Activated T-helper 2 cell treated with anti-CD3 and anti-CD28 coated beads, Interferon-gamma antibody, Interleukin-2, Interleukin-4, amounts not matched to agents 10 μg/mL and 5 μg/mL and 100 μg/mL, durations not matched to agents 14 hours and 24 hours and 36 hours (primary cell): ENCODE measurements at regions of chr10 and their contacts with region 1.

Region 1: GRCh38 chr10:24901686-24902399 is 50.6 kb downstream of the PRTFDC1 start:
- DNase-seq: no peak
- H3K4me3 Mint-ChIP-seq: no peak overlapping the region
- H3K27ac Mint-ChIP-seq: peak overlapping the region; percentile 57
- H3K4me1 Mint-ChIP-seq: peaks cover 36% of the 10 kb centered on the region
- H3K27me3 Mint-ChIP-seq: no peaks in the 10 kb centered on the region

Region 2: DNA sequence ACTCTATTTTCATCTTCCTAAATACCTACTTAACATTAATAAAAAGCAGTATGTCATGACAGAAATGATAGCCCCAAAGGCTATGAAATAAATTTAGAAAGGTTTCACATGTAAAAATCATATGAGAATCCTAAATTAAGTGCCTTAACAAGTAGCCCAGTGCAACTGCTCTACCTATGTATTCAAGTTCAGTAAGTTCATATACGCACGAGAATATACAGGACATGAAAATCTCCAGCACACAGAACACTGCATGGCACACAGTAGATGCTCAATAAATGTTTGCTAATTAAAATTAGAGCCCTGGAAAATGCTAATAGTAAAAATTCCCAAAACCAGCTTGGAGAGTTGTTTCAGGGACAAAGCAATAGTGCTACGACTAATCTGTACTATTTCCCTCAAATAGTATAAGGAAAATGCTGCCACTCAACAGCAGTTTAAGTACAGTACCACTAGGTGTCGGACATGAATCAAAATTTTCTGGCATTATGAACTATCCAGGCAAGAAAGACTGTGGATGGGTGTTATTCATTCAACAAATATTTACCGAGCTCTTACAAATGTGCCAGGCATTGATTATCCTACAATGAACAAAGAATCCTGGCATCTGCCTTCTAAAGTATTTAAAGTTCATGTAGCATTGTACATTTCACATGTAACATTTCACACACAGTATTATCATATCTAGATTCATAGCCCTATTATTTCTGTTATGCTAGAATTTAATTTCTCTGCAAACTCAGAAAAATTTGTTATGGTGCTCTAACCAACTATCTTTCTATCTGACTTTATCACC is 259.0 kb before region 1 on chr10:
- intact Hi-C with region 1: no loop called
- DNase-seq: no peak
- H3K4me3 Mint-ChIP-seq: no peak overlapping the region
- H3K27ac Mint-ChIP-seq: no peak overlapping the region
- H3K4me1 Mint-ChIP-seq: peaks cover 6% of the 10 kb centered on the region
- H3K27me3 Mint-ChIP-seq: no peaks in the 10 kb centered on the region

Region 3: DNA sequence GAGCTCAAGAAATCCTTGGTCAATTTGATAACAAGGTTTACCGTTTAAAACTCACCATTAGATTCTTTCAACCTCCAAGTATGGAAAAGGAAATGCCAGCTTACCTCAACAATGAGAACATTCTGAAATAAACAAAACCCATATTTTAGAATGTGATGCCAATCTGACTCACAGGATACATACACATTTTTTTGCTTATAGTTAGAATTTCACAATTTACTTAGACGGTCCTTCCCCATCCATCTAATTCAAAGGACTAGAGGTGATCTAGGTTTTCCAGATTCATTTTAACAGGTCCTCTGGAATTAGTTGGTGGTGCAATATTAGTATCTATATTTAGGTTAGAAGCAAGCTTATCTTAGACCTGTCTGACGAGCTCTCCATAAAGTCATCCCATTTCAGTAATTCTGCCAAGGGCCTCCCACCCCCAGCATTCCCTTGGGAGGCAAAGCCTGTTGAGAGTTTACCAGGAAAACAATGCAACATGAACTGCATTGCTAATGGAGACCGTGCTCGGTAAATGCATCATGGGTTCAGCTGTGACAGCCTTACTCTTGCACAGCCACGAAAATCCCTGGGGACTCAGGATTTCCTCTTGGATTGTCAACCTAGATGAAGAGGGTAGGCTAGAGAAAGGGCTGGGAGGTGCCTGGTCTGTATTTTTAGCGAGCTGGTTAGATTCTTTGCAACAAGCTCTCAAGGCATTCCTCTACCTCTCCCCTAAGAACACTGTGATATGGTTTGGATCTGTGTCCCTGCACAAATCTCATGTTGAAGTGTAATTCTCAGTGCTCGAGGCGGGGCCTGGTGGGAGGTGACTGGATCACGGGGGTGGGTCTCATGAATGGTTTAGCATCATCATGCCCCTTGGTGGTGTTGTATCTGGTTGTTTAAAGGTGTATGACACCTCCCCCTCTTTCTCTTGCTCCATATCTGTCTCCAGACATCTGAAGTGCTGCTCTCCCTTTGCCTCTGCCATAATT is 43.3 kb before region 1 on chr10:
- intact Hi-C with region 1: no loop called
- DNase-seq: no peak
- H3K4me3 Mint-ChIP-seq: no peak overlapping the region
- H3K27ac Mint-ChIP-seq: no peak overlapping the region
- H3K4me1 Mint-ChIP-seq: peaks cover 2% of the 10 kb centered on the region
- H3K27me3 Mint-ChIP-seq: peaks cover 15% of the 10 kb centered on the region

Region 4: DNA sequence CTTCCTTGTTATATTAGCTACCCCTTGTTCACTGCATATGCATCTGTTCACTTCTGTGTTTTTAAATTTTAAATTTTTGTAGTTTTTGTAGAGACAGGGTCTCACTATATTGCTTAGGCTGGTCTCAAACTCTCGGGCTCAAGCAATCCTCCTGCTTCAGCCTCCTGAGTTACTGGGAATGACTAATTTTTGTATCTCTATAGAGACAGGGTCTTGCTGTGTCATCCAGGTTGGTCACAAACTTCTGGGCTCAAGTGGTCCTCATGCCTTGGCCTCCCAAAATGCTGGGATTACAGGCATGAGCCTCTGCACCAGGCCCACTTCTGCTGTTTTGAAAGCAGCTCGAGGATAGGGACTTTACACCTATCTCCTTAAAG is 14.0 kb before region 1 on chr10:
- intact Hi-C with region 1: loop called (anchors 2 kb)
- DNase-seq: no peak
- H3K4me3 Mint-ChIP-seq: no peak overlapping the region
- H3K27ac Mint-ChIP-seq: peak overlapping the region; percentile 64
- H3K4me1 Mint-ChIP-seq: peaks cover 27% of the 10 kb centered on the region
- H3K27me3 Mint-ChIP-seq: no peaks in the 10 kb centered on the region

Region 5: GRCh38 chr10:24920907-24921881 is 19.4 kb after region 1 on chr10:
- intact Hi-C with region 1: loop called (anchors 1 kb)
- DNase-seq: peak; percentile 25
- H3K4me3 Mint-ChIP-seq: no peak overlapping the region
- H3K27ac Mint-ChIP-seq: peak overlapping the region; percentile 85
- H3K4me1 Mint-ChIP-seq: peaks cover 25% of the 10 kb centered on the region
- H3K27me3 Mint-ChIP-seq: no peaks in the 10 kb centered on the region

Region 6: DNA sequence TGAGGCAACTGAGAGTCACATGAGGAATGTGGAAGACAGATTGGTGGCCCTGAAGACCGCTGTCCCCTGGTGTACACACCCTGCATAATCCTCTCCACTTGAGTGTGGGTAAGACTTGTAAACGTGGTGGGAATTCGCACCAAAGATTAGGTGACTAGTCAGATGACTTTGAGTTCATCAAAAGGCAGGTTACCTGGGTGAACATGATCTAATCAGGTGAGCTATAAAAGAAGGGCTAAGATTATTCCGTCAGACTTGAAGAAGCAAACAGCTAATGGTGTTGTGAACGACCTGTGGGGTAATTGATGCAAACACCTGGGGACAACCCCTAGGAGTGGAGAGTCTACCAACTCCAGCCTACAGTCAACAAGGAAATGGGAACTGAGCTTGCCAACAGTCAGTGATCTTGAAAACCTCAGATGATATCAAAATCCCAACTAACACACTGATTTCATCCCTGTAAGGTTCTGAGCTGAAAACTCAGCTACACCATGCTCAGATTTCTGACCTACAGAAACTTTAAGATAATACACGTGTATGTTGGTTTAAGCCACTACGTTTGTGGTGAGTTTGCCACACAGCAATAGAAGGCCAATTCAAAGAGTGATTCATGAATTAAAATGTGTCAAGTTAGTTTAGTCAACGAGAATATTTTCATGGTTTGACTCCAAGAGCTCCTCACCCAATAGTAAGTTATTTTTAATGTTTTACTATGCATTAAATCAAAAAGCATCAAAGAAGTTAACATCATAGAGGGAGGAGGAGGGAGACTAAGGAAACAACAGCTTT is 33.9 kb after region 1 on chr10:
- intact Hi-C with region 1: no loop called
- DNase-seq: no peak
- H3K4me3 Mint-ChIP-seq: no peak overlapping the region
- H3K27ac Mint-ChIP-seq: no peak overlapping the region
- H3K4me1 Mint-ChIP-seq: peaks cover 6% of the 10 kb centered on the region
- H3K27me3 Mint-ChIP-seq: peaks cover 13% of the 10 kb centered on the region

Region 7: DNA sequence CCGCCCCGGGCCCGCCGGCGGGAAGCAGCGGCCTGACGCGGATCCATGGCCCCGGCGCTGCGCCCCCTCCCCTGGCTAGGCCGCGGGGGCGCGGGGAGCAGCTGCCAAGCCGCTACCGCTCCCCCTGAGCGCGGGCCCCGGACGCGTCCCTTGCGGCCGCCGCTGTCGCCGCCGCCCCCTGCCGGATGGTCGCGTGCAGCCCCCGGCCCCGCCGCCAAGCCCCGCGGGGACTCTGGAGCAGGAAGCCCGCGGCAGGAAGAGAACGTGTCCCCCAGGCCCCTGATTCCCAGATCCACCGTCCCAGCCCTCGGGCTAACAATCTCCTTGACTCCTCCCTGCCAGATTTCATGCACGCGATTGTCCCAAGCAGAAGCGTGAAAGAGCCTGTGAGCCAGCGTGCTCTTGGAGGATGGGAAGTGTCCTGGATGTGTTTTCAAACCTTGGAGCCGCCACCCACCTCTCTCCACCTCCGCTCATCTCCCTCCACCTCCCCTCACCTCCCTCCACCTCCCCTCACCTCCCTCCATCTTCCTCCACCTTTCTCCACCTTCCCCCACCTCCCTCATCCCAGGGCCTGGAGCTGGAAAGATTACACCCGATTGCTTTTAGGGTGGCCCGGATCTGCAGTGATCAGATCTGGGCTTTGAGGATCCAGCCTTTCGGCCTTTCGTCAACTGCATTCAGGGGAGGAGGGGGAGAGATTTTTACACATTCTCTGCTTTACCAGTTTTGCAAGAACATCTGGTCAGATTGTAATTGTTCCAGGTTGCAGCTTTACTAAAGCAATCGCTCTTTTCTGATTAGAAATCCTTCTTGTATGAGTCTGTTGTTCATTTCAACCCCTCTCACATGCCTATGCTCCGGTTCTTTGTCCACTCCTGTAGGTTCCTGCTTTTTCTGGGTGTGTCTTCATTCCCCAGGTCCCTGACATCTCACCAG is 51.1 kb after region 1 on chr10:
- intact Hi-C with region 1: loop called (anchors 5 kb)
- DNase-seq: peak; percentile 15
- H3K4me3 Mint-ChIP-seq: peak overlapping the region; percentile 64
- H3K27ac Mint-ChIP-seq: peak overlapping the region; percentile 29
- H3K4me1 Mint-ChIP-seq: peaks cover 9% of the 10 kb centered on the region
- H3K27me3 Mint-ChIP-seq: peaks cover 10% of the 10 kb centered on the region